ENCODE measurements at regions of chr17 and their contacts with region 1.

Region 1: DNA sequence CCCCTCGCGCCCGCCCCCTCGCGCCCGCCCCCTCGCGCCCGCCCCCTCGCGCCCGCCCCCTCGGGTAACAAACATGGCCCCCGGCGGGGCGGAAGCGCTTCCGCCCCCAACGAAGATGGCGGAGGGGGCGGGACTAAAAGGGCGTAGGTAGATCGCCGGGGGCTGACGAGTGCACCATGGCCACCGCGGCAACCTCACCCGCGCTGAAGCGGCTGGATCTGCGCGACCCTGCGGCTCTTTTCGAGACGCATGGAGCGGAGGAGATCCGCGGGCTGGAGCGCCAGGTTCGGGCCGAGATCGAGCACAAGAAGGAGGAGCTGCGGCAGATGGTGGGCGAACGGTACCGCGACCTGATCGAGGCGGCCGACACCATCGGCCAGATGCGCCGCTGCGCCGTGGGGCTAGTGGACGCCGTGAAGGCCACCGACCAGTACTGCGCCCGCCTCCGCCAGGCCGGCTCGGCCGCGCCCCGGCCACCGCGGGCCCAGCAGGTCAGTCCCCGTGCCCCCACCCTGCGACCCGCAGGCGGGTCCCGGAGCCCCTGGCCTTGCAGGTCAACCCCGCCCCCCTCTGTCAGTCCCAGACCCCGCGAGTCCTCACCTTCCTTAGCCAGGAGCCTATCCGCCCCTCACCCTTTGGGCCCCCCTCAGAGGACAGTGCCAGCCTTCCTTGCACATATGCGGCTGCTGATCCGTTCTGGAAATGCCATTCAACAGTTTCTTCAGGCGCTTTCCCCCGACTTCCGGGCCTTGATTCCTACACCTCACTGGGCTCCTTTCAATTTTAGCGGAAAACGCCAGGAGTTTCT is at the start of gene COG1:
- DNase-seq: peak; percentile 92
- ATAC-seq: peak; percentile 89
- total RNA-seq, gene COG1: 46.1 TPM

Region 2: DNA sequence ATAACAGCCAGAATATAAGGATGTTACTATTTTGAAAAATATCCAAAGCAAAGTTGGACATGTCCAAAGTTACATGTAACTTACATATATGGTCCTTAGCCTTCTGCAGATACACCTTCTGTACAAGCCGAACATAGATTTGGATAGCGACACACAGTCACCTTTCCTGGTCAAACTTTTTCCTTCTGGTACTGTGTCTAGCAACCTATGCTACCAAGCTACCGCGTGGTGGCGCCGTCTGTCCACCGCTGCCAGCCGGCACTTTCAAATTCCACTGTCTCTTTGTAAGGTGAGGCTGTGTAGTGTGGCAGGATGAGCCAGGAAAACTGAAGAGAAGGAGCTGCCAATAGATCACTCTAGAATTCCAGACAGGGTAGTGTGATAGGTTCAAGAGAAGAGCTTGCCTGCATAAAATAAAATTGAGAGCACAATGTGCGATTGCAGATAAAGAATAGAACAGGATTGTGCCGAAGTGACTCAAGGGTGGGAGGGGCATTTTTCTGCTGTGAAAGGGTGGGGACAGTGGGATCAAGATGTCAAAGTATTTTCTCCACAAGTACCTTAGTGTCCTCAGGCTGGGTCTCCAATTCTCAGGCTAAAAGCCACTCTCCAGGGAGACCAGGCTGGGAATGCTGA is 467.5 kb before region 1 on chr17:
- intact Hi-C with region 1: loop called (anchors 10 kb)
- DNase-seq: peak; percentile 60
- ATAC-seq: peak; percentile 88

Region 3: DNA sequence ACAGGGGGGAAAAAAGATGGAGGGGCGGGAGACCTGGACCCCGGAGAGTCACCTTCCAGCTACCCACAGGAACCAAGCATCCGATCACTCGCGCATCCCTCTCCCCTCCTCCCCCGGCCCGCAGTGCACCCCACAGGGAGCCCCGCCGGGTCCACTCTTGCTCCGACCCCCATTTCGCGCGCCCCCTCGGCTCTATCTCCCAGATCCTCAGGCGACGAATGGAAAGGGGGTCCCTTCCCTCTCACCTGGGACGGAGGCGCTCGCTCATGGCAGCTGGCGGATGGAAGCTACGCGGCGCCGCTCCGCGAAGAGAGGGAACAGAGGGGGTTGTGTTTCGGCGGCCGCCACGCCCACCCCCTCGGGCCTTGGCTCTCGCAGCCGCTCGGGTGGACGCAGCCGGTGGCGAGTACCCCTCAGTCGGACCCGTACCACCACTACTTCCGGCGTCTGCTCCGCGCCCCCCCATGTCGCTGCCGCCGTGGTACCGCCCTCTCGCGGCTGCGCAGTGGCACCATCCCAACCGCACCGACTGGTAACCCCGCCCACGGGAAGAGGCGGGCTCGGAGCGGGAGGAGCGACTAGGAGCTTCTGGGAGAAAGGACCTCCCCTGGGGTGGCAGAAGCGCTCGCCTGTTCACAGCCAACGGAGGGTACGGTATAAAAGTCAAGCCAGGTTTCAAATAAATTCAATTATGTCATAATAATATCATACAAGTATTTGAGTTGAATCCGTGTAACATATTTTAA is 38.9 kb after region 1 on chr17:
- intact Hi-C with region 1: loop called (anchors 5 kb)
- DNase-seq: peak; percentile 98
- ATAC-seq: peak; percentile 97

Region 4: DNA sequence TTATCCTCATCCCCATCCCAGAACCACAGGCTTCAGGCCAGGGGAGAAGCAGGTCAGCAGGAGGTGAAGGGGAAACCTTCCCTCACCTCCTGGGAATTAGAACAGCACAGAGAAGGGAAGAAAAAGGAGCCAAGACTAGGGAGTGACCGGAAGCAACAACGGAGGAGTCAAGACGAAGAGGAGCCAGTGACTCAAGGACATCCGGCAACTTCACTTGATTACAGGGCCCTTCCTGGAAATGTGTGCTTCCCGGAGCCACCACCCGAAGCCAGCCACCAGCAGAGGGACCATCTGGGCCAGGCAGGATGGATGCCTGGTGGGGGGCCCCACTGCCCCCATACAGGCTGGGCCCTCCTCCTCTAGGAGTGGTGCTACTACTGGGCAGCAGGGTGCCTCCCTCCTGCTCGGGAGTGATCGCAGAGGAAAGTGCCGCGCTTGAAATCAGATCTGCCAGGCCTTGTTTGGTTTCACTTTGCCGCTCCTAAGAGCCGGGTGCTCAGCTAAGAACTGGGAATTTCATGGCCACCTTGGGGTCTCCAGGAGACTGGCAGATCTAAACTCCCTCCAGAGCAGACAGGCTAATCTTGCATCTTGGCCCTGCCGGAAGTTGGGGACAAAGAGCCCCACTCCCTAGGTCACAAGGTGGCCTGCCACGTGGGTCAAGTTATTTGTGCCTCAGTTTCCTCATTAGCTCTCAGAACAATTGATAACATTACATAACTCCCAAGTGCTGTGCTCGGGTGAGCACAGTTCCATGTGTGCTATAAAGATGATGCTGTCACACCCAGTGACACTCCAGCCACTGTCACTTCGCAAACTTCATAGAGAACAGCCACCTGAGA is 112.1 kb after region 1 on chr17:
- intact Hi-C with region 1: no loop called
- DNase-seq: peak; percentile 75
- ATAC-seq: peak; percentile 28